B cell (primary cell): ENCODE measurements at regions of chr12 and their contacts with region 1.

Region 1: DNA sequence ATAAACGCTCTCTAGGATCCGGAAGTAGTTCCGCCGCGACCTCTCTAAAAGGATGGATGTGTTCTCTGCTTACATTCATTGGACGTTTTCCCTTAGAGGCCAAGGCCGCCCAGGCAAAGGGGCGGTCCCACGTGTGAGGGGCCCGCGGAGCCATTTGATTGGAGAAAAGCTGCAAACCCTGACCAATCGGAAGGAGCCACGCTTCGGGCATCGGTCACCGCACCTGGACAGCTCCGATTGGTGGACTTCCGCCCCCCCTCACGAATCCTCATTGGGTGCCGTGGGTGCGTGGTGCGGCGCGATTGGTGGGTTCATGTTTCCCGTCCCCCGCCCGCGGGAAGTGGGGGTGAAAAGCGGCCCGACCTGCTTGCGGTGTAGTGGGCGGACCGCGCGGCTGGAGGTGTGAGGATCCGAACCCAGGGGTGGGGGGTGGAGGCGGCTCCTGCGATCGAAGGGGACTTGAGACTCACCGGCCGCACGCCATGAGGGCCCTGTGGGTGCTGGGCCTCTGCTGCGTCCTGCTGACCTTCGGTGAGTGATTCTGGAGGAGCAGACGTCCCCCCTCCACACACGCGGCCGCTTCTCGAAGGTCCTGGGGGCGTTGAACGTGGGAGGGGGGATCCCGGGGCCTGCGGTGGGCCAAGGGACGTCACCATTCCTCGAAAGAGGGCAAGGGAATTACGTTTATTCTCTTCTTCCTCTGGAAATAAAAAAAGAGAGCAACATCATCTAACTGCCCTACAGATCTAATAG is at the start of gene HSP90B1:
- DNase-seq: peak; percentile 100
- ATAC-seq: peak; percentile 72
- H3K4me3 ChIP-seq: peak within 1 kb of the TSS; percentile 80 to 93 (median 85)
- H3K4me3 Mint-ChIP-seq: peak within 1 kb of the TSS; percentile 93
- H3K27ac ChIP-seq: peak within 1 kb of the TSS; percentile 97 to 100
- H3K27ac Mint-ChIP-seq: peak within 1 kb of the TSS; percentile 98
- H3K4me1 ChIP-seq: peaks cover 32 to 34% of the 10 kb centered on the region in 2 donors
- H3K4me1 Mint-ChIP-seq: peaks cover 61% of the 10 kb centered on the region
- H3K27me3 ChIP-seq: no peaks in the 10 kb centered on the region
- H3K27me3 Mint-ChIP-seq: no peaks in the 10 kb centered on the region
- CTCF ChIP-seq: no peak
- total RNA-seq, gene HSP90B1: 203 and 207 TPM in 2 replicates

Region 2: GRCh38 chr12:102061560-102062418 is 1868.4 kb before region 1 on chr12 and contains the start of gene WASHC3:
- CTCF ChIA-PET with region 1: no interaction called
- POLR2A ChIA-PET with region 1: no interaction called
- intact Hi-C with region 1: loop called (anchors 5 kb)
- DNase-seq: peak; percentile 95
- ATAC-seq: peak; percentile 96
- H3K4me3 ChIP-seq: peak within 1 kb of the TSS; percentile 72 to 92 (median 89)
- H3K4me3 Mint-ChIP-seq: peak within 1 kb of the TSS; percentile 95
- H3K27ac ChIP-seq: peak within 1 kb of the TSS; percentile 93 to 96
- H3K27ac Mint-ChIP-seq: peak within 1 kb of the TSS; percentile 96
- H3K4me1 ChIP-seq: peaks cover 5 to 12% of the 10 kb centered on the region in 2 donors
- H3K4me1 Mint-ChIP-seq: peaks cover 27% of the 10 kb centered on the region
- H3K27me3 ChIP-seq: peaks cover 0 to 4% (median 0%) of the 10 kb centered on the region in 4 experiments
- H3K27me3 Mint-ChIP-seq: no peaks in the 10 kb centered on the region
- CTCF ChIP-seq: no peak
- total RNA-seq, gene WASHC3: 52.8 and 55.8 TPM in 2 replicates

Region 3: GRCh38 chr12:103806803-103807202 is 123.4 kb before region 1 on chr12:
- CTCF ChIA-PET with region 1: no interaction called
- POLR2A ChIA-PET with region 1: no interaction called
- intact Hi-C with region 1: no loop called
- DNase-seq: no peak
- ATAC-seq: no peak
- H3K4me3 ChIP-seq: no peak overlapping the region
- H3K4me3 Mint-ChIP-seq: no peak overlapping the region
- H3K27ac ChIP-seq: no peak overlapping the region
- H3K27ac Mint-ChIP-seq: no peak overlapping the region
- H3K4me1 ChIP-seq: no peaks in the 10 kb centered on the region
- H3K4me1 Mint-ChIP-seq: no peaks in the 10 kb centered on the region
- H3K27me3 ChIP-seq: no peaks in the 10 kb centered on the region
- H3K27me3 Mint-ChIP-seq: no peaks in the 10 kb centered on the region
- CTCF ChIP-seq: no peak

Region 4: GRCh38 chr12:103877934-103878510 is 52.2 kb before region 1 on chr12:
- CTCF ChIA-PET with region 1: interaction called, 22 read pairs
- POLR2A ChIA-PET with region 1: interaction called, 3 read pairs
- intact Hi-C with region 1: loop called (anchors 1 kb)
- DNase-seq: peak; percentile 74
- ATAC-seq: peak; percentile 70
- H3K4me3 ChIP-seq: no peak overlapping the region
- H3K4me3 Mint-ChIP-seq: no peak overlapping the region
- H3K27ac ChIP-seq: no peak overlapping the region
- H3K27ac Mint-ChIP-seq: no peak overlapping the region
- H3K4me1 ChIP-seq: peaks cover 15 to 20% of the 10 kb centered on the region in 2 donors
- H3K4me1 Mint-ChIP-seq: peaks cover 29% of the 10 kb centered on the region
- H3K27me3 ChIP-seq: no peaks in the 10 kb centered on the region
- H3K27me3 Mint-ChIP-seq: no peaks in the 10 kb centered on the region
- CTCF ChIP-seq: peak; percentile 81

Region 5: DNA sequence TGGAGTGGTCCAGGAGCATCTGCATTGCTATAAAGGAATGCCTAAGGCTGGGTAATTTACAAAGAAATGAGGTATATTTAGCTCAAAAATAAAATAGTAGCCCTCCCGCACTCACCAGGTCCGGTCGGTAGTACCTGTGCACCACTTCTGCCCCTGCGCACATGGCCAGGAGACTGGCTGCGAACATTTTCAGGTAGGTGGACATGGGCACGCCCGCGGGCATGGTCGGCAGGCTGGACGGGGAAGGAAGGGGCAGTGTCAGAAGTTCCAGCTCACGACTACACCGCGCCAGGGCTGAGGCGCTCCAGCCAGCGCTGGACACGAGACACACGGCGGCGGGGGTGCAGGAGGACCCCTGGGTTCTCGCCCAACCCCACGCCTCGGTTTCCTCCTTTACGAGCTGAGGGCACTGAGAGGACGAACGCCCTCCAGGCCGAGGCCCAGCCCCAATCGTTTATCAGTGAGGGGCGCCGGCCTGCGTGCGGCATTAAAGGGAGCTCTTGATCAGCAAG is 26.4 kb after region 1 on chr12:
- CTCF ChIA-PET with region 1: interaction called, 8 read pairs
- POLR2A ChIA-PET with region 1: interaction called, 19 read pairs
- intact Hi-C with region 1: loop called (anchors 1 kb)
- DNase-seq: no peak
- ATAC-seq: peak; percentile 2
- H3K4me3 ChIP-seq: peak overlapping the region; percentile 60 to 93 (median 86)
- H3K4me3 Mint-ChIP-seq: peak overlapping the region; percentile 96
- H3K27ac ChIP-seq: peak overlapping the region; percentile 67 to 89
- H3K27ac Mint-ChIP-seq: peak overlapping the region; percentile 97
- H3K4me1 ChIP-seq: peaks cover 9 to 15% of the 10 kb centered on the region in 2 donors
- H3K4me1 Mint-ChIP-seq: peaks cover 30% of the 10 kb centered on the region
- H3K27me3 ChIP-seq: no peaks in the 10 kb centered on the region
- H3K27me3 Mint-ChIP-seq: no peaks in the 10 kb centered on the region
- CTCF ChIP-seq: no peak

Region 6: DNA sequence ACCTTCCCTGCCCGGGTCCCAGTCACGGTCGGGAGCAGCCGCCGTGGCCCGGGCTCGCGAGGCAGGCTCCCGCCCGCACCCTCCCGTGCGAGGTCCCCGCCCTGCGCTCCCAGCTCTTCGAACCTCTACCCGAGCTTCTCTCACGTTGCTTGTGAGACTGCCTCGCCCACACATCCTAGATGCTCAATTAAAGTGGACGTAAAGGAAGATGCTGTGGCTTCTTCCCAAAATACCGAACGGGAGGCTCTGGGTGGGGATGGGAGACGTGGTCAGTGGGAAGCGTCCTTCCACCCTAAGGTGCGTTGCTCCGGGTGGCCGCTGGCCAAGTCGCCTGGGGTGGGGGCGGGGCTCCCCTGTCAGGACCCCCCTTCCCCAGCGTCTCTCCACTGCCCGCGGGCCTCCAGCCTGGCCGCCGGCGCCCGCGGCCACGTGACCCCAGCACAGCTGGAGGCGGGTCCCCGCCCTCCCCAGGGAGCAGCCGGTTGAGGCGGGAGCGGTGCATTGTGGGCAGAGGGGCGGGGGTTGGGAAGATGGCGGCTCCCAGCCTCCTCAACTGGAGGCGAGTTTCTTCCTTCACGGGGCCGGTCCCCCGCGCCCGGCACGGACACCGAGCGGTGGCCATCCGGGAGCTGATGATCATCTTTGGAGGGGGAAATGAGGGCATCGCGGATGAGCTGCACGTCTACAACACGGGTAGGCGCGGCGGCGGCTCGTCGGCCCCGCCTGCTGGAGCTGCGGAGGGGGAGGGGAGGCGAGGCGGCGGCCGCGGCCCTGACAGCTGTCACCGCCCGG is 134.0 kb after region 1 on chr12 and contains the start of gene HCFC2:
- CTCF ChIA-PET with region 1: no interaction called
- POLR2A ChIA-PET with region 1: interaction called, 15 read pairs
- intact Hi-C with region 1: loop called (anchors 1 kb)
- DNase-seq: peak; percentile 94
- ATAC-seq: peak; percentile 92
- H3K4me3 ChIP-seq: peak within 1 kb of the TSS; percentile 80 to 95 (median 85)
- H3K4me3 Mint-ChIP-seq: peak within 1 kb of the TSS; percentile 94
- H3K27ac ChIP-seq: peak within 1 kb of the TSS; percentile 36 to 79
- H3K27ac Mint-ChIP-seq: peak within 1 kb of the TSS; percentile 93
- H3K4me1 ChIP-seq: peaks cover 10 to 14% of the 10 kb centered on the region in 2 donors
- H3K4me1 Mint-ChIP-seq: peaks cover 17% of the 10 kb centered on the region
- H3K27me3 ChIP-seq: no peaks in the 10 kb centered on the region
- H3K27me3 Mint-ChIP-seq: peaks cover 9% of the 10 kb centered on the region
- CTCF ChIP-seq: no peak
- total RNA-seq, gene HCFC2: 10.5 and 11.6 TPM in 2 replicates